Activated naive CD4-positive, alpha-beta T cell treated with anti-CD3 and anti-CD28 coated beads for 36 hours (primary cell): ENCODE measurements at regions of chr2 and their contacts with region 1.

Region 1: DNA sequence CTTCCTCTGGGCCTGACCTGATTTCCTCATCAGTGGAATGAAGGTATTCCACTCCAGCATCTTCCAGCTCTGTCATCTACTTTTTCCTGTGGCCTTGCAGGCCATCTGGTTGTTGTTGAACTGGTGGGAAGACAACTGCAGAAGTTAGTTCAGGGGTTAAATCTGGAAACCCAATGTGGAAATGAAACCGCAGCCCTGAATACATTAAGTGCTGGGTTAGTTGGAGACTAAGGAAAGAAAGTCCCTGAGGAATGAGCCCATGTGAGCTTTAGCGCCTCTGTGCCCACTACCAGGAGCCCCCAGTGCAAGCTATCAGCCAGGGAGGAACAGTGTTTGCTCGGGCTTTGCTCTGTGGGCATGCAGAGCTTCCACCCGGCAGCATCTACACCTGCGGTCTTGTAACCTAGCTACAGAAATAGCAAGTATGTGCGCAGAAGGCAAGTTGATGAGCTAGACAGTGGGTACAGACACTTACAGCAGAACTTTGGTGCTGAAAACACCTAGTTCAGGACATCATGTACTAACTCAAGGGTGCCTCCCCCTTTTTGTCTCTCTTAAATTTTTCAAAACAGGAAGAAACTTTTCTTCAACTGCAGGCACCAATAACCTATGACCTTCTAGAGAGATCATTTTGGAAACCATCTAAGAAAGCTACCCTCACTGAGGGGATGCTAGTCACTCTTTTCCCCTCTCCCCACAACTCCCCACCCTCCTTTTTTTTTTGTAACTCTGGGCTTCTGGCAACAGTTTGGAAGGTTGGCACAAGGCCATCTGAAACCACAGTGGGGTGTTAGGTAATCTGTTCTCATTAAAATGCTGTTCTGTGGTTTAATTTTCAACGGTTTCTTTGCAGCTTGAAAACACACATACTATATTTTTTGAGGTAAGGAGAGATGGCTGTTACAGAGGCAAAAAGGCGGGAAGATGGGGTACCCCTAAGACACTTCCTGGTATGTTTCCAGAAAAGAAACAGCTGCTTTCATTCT is 18.3 kb upstream of the CXCR4 start:
- DNase-seq: peak; percentile 78
- H3K4me3 Mint-ChIP-seq: no peak overlapping the region
- H3K27ac Mint-ChIP-seq: peak overlapping the region; percentile 79
- H3K4me1 Mint-ChIP-seq: peaks cover 94% of the 10 kb centered on the region
- H3K27me3 Mint-ChIP-seq: peaks cover 25% of the 10 kb centered on the region

Region 2: GRCh38 chr2:135820003-135820618 is 316.1 kb before region 1 on chr2:
- CTCF ChIA-PET with region 1: no interaction called
- intact Hi-C with region 1: loop called (anchors 2 kb)
- DNase-seq: peak; percentile 94
- H3K4me3 Mint-ChIP-seq: peak overlapping the region; percentile 64
- H3K27ac Mint-ChIP-seq: peak overlapping the region; percentile 79
- H3K4me1 Mint-ChIP-seq: peaks cover 48% of the 10 kb centered on the region
- H3K27me3 Mint-ChIP-seq: no peaks in the 10 kb centered on the region

Region 3: DNA sequence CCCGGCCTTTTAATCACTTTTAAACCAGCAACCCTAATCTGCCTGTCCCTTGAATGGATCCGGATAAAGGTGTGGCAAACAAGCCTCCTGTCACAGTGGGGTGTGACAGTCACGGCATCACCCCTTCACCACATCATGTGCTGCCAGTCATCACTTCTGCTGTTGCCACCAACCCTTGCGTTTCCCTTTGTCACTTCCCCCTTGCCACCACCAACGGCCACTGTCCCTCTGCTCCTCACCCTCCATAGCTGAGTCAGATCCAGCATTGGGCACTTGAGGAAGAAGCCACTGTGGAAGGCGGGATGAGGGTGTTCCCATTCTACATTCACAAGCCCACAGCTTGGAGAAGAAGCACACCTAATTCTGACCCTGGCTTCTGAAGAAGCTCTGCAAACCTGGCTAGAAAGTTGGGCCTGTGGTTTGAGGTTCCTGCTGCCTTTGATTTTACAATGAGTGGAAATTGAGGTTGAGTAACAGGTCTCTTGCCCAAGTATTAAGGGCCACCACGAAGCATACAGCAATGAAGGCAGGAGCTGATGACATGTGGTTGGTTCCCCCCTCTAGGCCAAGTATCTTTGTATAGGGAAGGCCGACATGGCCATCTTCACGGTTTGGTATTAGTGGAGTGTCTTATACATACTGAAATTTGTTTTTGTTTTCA is 127.9 kb before region 1 on chr2:
- CTCF ChIA-PET with region 1: interaction called, 4 read pairs
- intact Hi-C with region 1: loop called (anchors 1 kb)
- DNase-seq: peak; percentile 73
- H3K4me3 Mint-ChIP-seq: no peak overlapping the region
- H3K27ac Mint-ChIP-seq: peak overlapping the region; percentile 15
- H3K4me1 Mint-ChIP-seq: peaks cover 38% of the 10 kb centered on the region
- H3K27me3 Mint-ChIP-seq: no peaks in the 10 kb centered on the region

Region 4: DNA sequence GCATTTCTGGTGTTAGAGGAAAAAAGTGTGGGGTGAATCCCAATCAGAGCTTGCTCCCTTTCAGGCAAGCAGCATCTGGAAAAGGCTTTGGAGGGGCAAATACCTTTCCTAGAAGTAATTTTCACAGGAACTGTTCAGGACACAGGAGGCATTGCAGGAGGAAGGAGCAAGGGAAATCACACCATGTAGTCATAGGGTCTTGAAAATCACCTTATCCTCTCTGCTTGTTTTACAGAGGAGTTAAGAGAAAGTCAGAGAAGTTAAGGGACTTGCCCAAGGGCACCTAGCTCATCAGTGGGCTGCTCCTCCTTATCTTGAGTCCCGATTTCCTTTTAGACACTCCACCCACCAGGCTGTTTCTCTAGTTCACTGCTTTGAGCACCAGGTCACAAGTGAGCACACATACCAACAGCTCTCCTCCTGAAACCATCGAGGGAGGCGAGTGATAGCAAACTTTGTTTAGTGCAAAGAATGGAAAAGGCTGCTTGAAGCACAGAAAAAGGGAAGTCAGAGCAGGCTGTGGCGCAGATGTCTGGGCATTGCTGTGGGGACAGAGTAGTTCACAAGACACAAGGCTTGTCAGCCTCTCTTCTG is 70.9 kb after region 1 on chr2:
- CTCF ChIA-PET with region 1: no interaction called
- intact Hi-C with region 1: loop called (anchors 1 kb)
- DNase-seq: peak; percentile 61
- H3K4me3 Mint-ChIP-seq: no peak overlapping the region
- H3K27ac Mint-ChIP-seq: peak overlapping the region; percentile 86
- H3K4me1 Mint-ChIP-seq: peaks cover 37% of the 10 kb centered on the region
- H3K27me3 Mint-ChIP-seq: no peaks in the 10 kb centered on the region

Region 5: GRCh38 chr2:136305517-136306192 is 169.4 kb after region 1 on chr2:
- CTCF ChIA-PET with region 1: no interaction called
- intact Hi-C with region 1: loop called (anchors 1 kb)
- DNase-seq: peak; percentile 85
- H3K4me3 Mint-ChIP-seq: no peak overlapping the region
- H3K27ac Mint-ChIP-seq: peak overlapping the region; percentile 81
- H3K4me1 Mint-ChIP-seq: peaks cover 21% of the 10 kb centered on the region
- H3K27me3 Mint-ChIP-seq: no peaks in the 10 kb centered on the region

Region 6: GRCh38 chr2:136378712-136379595 is 242.7 kb after region 1 on chr2:
- CTCF ChIA-PET with region 1: interaction called, 7 read pairs
- intact Hi-C with region 1: loop called (anchors 1 kb)
- DNase-seq: peak; percentile 90
- H3K4me3 Mint-ChIP-seq: no peak overlapping the region
- H3K27ac Mint-ChIP-seq: no peak overlapping the region
- H3K4me1 Mint-ChIP-seq: peaks cover 79% of the 10 kb centered on the region
- H3K27me3 Mint-ChIP-seq: no peaks in the 10 kb centered on the region

Region 7: DNA sequence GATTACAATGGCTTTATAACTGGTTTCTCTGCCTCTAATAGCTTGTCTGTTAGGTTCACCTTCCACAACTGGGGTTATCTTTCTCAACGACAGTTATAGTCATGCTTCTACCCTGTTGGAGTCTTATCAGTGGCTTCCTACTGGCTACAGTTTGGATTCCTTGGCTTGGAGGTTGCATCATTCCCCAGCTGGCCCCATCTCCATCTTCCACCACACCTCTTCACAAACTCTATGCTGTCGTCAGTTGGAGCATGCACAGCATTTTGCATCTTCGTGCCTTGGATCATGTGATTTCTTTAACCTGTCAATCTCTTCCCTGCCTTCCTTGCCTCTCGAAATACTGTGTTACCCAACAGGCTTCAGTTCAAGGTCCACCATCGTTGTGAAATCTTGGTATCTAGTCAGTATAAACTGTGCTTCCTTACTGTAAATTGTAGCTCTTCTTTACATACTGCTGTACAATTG is 298.1 kb after region 1 on chr2:
- CTCF ChIA-PET with region 1: no interaction called
- intact Hi-C with region 1: no loop called
- DNase-seq: no peak
- H3K4me3 Mint-ChIP-seq: no peak overlapping the region
- H3K27ac Mint-ChIP-seq: no peak overlapping the region
- H3K4me1 Mint-ChIP-seq: no peaks in the 10 kb centered on the region
- H3K27me3 Mint-ChIP-seq: peaks cover 2% of the 10 kb centered on the region

Region 8: DNA sequence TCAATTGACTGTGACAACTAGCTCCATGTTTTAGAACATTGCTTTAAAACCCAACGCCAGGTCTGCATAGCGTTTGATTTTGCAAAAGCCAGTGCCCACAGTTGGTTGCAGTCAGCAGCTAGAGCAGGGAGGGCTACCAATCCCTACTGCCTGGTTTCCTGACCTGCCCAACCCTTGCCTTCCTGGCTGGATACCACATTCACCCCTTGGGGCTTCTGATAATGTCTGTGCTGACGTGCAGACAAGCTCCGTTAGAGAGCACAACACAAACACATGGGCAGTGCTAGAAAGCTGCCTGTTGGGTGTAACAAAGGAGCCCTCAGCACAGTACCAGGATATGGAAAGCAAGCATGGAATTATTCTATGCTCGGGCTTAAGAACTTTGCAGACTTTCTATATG is 557.8 kb after region 1 on chr2:
- CTCF ChIA-PET with region 1: no interaction called
- intact Hi-C with region 1: no loop called
- DNase-seq: no peak
- H3K4me3 Mint-ChIP-seq: no peak overlapping the region
- H3K27ac Mint-ChIP-seq: no peak overlapping the region
- H3K4me1 Mint-ChIP-seq: no peaks in the 10 kb centered on the region
- H3K27me3 Mint-ChIP-seq: no peaks in the 10 kb centered on the region